Activated T-helper 2 cell treated with anti-CD3 and anti-CD28 coated beads, Interferon-gamma antibody, Interleukin-2, Interleukin-4, amounts not matched to agents 10 μg/mL and 5 μg/mL and 100 μg/mL, durations not matched to agents 14 hours and 24 hours and 36 hours (primary cell): ENCODE measurements at regions of chr9 and their contacts with region 1.

Region 1: DNA sequence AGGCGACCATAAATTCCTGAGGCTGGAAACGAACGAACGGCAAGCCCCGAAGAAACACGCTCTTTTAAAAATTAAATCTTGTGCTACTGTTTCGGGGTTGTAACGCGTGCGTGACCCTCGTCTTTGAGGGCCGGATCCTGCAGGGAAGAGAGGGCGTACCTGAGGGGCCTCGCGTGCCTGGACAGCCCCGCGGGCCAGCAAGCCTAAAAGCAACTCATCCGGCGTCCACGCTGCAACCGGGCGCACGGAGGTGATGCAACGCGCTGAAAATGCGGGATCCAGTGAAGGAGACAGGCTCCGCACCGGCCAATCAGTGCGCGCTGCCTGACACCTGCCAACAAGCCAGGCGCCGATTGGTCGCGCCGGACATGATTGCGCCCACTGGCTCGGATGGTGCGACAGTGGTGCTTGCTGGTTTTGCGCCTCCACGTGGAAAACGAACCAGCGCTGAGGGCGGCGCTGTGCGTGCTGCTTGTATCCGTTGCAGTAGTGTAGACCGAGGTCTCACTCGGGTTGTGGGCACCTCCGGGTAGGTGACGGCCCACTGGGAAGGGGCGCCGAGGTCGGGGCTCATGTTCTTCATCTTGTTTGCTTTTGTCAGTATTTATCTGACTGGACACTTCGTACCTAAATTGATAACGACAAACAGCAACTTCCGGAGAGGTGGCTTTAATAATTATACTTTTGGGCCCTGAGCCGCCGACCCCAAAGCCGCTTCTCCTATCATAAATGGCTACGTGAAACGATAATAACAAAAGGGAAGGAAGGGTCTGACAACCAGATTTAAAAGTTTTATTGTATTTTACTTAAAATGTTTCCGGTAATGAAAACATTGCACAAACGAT is at the start of gene IARS1:
- DNase-seq: peak; percentile 100
- H3K4me3 Mint-ChIP-seq: peak within 1 kb of the TSS; percentile 97
- H3K27ac Mint-ChIP-seq: peak within 1 kb of the TSS; percentile 99
- H3K4me1 Mint-ChIP-seq: peaks cover 55% of the 10 kb centered on the region
- H3K27me3 Mint-ChIP-seq: no peaks in the 10 kb centered on the region
- total RNA-seq, gene IARS1: 177 and 186 TPM in 2 replicates

Region 2: DNA sequence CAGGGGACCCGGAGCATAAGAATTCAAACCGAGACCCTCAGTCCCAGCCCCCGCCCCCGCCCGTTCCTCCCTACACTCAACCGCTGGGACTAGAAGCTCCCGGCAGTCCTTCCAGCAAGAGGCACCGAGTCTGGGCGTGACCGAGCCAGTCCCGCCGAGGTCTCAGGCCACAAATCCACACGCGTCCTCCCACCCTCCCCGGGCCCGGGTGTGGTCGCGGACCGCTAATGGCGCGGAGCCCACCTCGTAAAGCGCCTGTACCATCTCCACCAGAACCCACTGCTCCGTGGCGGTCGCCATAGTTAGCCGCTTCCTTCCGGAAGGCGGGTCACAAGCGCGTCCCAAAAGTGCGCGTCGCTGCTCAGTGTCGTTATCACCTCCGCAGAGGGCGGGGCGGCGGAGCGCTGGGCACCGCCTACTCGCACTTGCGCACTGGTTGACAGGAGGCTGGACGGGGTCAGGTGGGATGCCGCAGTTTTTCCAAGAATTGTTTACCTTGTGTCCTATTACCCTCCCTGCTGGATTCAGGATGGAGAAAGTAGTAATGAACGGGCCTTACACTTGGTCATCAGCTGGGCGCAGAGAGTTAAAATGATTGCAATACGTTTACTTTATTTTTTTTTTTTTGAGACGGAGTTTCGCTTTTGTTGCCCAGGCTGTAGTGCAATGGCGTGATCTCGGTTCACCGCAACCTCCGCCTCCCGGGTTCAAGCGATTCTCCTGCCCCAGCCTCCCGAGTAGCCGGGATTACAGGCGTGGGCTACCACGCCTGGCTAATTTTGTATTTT is 178.4 kb before region 1 on chr9 and contains the start of gene SPTLC1:
- intact Hi-C with region 1: loop called (anchors 1 kb)
- DNase-seq: peak; percentile 93
- H3K4me3 Mint-ChIP-seq: peak within 1 kb of the TSS; percentile 96
- H3K27ac Mint-ChIP-seq: peak within 1 kb of the TSS; percentile 96
- H3K4me1 Mint-ChIP-seq: peaks cover 26% of the 10 kb centered on the region
- H3K27me3 Mint-ChIP-seq: no peaks in the 10 kb centered on the region
- total RNA-seq, gene SPTLC1: 63.2 and 64.0 TPM in 2 replicates

Region 3: DNA sequence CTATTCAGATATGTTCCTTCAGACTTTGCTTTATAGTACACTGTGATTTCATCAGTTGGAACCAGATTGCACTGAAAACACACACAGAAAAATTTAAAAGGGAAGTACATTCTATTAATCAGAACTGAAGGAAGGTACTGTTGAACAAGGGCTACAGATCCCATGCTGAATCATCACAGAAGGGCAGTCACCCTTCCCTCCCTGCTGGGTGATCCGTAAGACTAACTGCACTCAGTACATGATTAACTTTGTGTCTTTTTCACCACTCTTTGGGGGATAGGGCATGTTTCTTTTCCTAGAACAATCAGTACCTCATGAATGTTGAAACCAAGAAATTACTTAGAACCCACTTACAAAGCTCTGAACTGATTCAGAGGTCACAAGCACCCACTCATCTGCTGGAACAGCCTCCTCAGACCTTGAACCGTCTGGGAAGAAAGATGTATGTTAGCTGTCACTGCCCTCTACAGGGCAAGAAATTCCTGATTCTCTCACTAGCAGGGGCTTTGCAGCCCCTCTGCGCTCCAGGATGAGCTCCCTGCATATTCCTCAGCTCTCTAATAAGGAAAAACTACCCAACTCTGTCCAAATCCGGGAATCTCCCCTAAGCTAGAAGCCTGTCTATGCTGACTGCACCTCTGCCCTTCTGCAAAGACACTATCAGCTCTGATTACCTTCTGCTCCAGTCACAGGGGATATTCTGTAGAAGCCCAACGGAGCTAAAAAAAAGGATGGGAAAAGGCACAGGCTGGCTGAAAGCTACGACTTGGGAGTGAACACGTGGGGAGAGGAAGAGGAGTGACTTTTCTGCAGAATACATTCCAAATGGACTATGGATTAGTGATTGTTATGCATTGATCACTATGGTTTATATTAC is 51.2 kb before region 1 on chr9:
- intact Hi-C with region 1: loop called (anchors 10 kb)
- DNase-seq: no peak
- H3K4me3 Mint-ChIP-seq: no peak overlapping the region
- H3K27ac Mint-ChIP-seq: no peak overlapping the region
- H3K4me1 Mint-ChIP-seq: no peaks in the 10 kb centered on the region
- H3K27me3 Mint-ChIP-seq: no peaks in the 10 kb centered on the region

Region 4: DNA sequence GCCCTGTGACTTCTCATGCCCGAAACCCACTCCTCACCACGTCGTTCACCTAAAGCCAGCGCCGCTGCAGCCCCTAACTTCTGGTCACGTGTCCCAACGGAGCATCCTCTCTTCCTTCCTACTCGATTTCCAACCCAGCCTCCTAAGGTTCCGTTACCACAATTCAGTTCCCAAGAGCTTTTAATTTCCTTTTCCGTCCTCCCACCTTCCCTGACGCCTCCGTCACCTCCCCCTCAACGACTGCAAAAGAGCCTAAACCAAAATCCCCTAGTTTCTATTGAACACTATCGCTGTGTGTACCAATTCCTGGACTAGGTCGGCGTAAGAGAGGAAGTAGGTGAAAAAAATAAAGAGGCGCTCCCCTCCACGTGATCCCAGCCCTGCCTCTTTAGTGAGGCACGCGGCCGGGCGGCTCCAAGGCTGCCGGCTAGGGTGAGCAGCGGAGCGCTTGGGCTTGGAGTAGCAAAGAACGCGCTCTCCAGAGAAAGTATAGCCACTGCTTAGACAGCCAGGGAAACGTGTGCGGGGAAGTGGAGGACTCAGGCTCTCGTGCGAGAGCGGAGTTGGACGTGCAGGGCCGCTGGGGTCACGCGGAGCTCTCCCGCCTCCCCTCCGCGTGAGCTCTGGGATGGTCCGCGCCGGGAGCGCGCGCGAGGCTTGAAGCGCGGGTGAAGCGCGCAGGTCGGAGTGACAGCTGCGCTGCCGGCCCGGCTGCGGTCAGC is 31.8 kb after region 1 on chr9 and contains the starts of genes CENPP and NOL8:
- intact Hi-C with region 1: loop called (anchors 1 kb)
- DNase-seq: peak; percentile 82
- H3K4me3 Mint-ChIP-seq: peak within 1 kb of the TSS; percentile 92
- H3K27ac Mint-ChIP-seq: peak within 1 kb of the TSS; percentile 95
- H3K4me1 Mint-ChIP-seq: peaks cover 31% of the 10 kb centered on the region
- H3K27me3 Mint-ChIP-seq: no peaks in the 10 kb centered on the region
- total RNA-seq, gene CENPP: 19.2 and 21.0 TPM in 2 replicates
- total RNA-seq, gene NOL8: 73.2 and 75.5 TPM in 2 replicates